ENCODE measurements at regions of chr2 and their contacts with region 1.

Region 1: GRCh38 chr2:100757621-100758394 is 62.1 kb upstream of the NPAS2 start:
- DNase-seq: peak in 1 of 2 experiments; percentile 72
- H3K4me3 ChIP-seq: no peak overlapping the region
- H3K27ac ChIP-seq: peak overlapping the region; percentile 40
- H3K4me1 ChIP-seq: peaks cover 55% of the 10 kb centered on the region
- H3K27me3 ChIP-seq: no peaks in the 10 kb centered on the region
- CTCF ChIP-seq: no peak

Region 2: DNA sequence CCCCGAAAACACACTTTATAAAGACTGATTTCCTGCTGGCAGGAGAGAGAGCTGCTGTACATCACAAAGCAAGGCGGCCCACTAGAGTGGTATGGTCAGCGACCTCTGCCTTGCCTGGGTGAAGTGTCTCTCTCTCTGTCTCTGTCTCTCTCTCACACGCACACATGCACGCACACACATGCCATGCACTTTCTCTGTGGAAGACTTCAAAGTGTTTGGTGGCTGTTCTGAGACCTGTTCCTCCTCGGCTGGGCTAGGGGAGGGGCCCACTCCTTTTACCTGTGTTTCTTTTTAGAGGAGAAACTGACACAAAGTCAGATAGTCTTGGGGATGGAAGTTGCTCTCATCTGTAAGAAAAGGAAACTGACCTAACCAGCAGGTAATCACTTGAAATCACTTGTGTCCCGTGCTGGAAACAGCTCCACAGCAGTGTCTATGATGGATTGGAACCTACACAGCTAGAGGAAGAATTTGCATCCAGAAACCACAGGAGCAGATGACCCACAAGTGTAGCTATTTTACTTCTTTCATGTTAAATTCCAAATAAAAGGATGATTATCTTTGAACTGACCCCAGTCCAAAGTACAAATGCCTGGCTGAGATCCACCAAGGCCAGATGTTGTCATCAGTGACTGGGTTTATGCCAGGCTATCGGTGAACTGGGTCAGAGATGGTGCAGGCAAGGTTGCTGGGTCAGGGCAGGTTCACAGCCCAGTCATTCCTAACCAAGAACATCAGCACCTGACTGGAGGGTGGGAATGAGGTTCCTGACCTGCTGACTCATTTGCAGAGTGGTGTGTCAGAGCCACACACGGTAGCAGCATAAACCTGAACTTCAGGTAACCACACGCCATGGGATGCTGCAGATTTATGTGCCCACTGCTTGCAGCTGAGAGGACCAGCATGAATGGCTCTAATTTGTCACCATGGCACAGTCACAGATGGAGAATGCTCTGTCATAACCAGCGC is 125.1 kb after region 1 on chr2:
- CTCF ChIA-PET with region 1: no interaction called
- POLR2A ChIA-PET with region 1: no interaction called
- intact Hi-C with region 1: no loop called
- DNase-seq: peak; percentile 84 to 98
- H3K4me3 ChIP-seq: no peak overlapping the region
- H3K27ac ChIP-seq: peak overlapping the region; percentile 80
- H3K4me1 ChIP-seq: peaks cover 75% of the 10 kb centered on the region
- H3K27me3 ChIP-seq: no peaks in the 10 kb centered on the region
- CTCF ChIP-seq: no peak

Region 3: GRCh38 chr2:101140978-101141657 is 383.3 kb after region 1 on chr2:
- CTCF ChIA-PET with region 1: no interaction called
- POLR2A ChIA-PET with region 1: interaction called, 20 read pairs
- intact Hi-C with region 1: no loop called
- DNase-seq: no peak
- H3K4me3 ChIP-seq: no peak overlapping the region
- H3K27ac ChIP-seq: peak overlapping the region; percentile 27
- H3K4me1 ChIP-seq: peaks cover 60% of the 10 kb centered on the region
- H3K27me3 ChIP-seq: no peaks in the 10 kb centered on the region
- CTCF ChIP-seq: no peak

Region 4: DNA sequence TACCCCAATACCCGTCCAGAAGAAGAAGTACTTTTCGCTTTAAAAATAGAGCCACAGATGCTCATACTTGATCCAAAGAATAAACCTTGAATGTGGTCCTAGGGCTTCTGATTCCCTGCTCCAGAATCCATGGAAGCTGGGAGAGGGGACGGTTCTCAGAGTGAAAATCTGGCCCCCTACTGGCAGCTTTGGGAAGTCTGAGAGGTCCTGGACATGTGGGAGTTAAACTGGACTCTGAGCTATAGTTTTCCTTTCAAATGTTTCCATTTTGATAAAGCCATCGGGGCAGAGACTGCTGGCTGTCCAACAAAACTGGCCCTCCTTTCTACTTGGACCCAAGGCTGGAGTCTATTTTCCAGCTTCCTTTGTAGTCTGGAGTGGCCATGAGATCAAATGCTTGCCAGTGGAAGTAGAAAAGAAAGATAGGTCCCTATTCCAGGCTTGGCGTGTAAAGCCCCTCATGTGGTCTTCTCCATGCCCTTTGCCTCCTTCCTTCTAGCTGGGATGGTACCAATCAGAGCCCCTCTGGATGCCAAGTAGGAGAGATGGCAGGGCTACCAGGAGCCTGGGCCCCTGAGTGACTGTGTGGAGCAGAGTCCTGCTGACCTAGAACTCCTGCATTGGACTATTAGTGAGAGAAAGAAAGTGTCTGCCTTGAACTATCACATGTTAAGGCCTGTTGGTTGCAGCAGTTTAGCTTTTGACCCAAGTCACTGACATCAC is 431.0 kb after region 1 on chr2:
- CTCF ChIA-PET with region 1: no interaction called
- POLR2A ChIA-PET with region 1: no interaction called
- intact Hi-C with region 1: no loop called
- DNase-seq: no peak
- H3K4me3 ChIP-seq: no peak overlapping the region
- H3K27ac ChIP-seq: no peak overlapping the region
- H3K4me1 ChIP-seq: peaks cover 9% of the 10 kb centered on the region
- H3K27me3 ChIP-seq: no peaks in the 10 kb centered on the region
- CTCF ChIP-seq: peak; percentile 69

Measured in PC-9 (cell line).